Panc1 (cell line): ENCODE measurements at regions of chr15 and their contacts with region 1.

Region 1: DNA sequence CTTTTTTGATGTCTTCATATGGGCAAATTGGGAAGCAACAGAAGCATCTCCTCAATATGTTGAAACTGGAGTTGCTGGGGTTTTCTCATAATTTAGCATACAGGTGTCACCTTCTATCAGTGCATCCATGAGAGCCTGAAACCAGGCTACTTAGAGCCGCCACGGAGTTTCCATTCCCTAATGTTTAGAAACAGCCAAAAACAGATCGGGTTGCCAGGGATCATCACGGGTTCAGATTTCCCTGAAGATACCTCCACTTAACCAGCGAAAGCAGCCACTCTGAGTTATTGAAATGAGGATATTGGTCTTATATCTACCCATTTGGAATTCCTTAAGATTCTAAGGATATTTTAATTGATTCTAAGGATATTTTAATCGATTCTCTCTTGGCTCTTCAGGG is 14.5 kb downstream of the TERB2 start:
- DNase-seq: no peak
- ATAC-seq: no peak
- H3K4me3 ChIP-seq: no peak overlapping the region
- H3K27ac ChIP-seq: no peak overlapping the region
- H3K4me1 ChIP-seq: no peaks in the 10 kb centered on the region
- H3K27me3 ChIP-seq: peaks cover 3% of the 10 kb centered on the region; the same call in 1 of the 2 replicates
- CTCF ChIP-seq: no peak

Region 2: GRCh38 chr15:44489464-44489863 is 481.6 kb before region 1 on chr15:
- CTCF ChIA-PET with region 1: no interaction called
- POLR2A ChIA-PET with region 1: no interaction called
- in situ Hi-C with region 1: no loop called
- intact Hi-C with region 1: no loop called
- DNase-seq: peak; percentile 33
- ATAC-seq: peak; percentile 83
- H3K4me3 ChIP-seq: no peak overlapping the region
- H3K27ac ChIP-seq: no peak overlapping the region
- H3K4me1 ChIP-seq: peaks cover 7% of the 10 kb centered on the region
- H3K27me3 ChIP-seq: no peaks in the 10 kb centered on the region
- CTCF ChIP-seq: no peak

Region 3: GRCh38 chr15:45146405-45146804 is 175.4 kb after region 1 on chr15:
- CTCF ChIA-PET with region 1: no interaction called
- POLR2A ChIA-PET with region 1: interaction called, 14 read pairs
- in situ Hi-C with region 1: no loop called
- intact Hi-C with region 1: no loop called
- DNase-seq: no peak
- ATAC-seq: no peak
- H3K4me3 ChIP-seq: no peak overlapping the region
- H3K27ac ChIP-seq: no peak overlapping the region
- H3K4me1 ChIP-seq: no peaks in the 10 kb centered on the region
- H3K27me3 ChIP-seq: no peaks in the 10 kb centered on the region
- CTCF ChIP-seq: no peak